ENCODE measurements at regions of chr6 and their contacts with region 1.

Region 1: GRCh38 chr6:1227935-1228753 is 83.8 kb upstream of the FOXQ1 start:
- DNase-seq: peak; percentile 91 to 94
- H3K4me3 ChIP-seq: peak overlapping the region; percentile 0; the same call in 1 of the 2 replicates
- H3K4me3 Mint-ChIP-seq: peak overlapping the region; percentile 52
- H3K27ac Mint-ChIP-seq: peak overlapping the region; percentile 67
- H3K4me1 ChIP-seq: peaks cover 57% of the 10 kb centered on the region
- H3K4me1 Mint-ChIP-seq: peaks cover 63% of the 10 kb centered on the region
- H3K27me3 ChIP-seq: no peaks in the 10 kb centered on the region
- H3K27me3 Mint-ChIP-seq: no peaks in the 10 kb centered on the region
- CTCF ChIP-seq: no peak

Region 2: GRCh38 chr6:996271-996852 is 231.8 kb before region 1 on chr6:
- CTCF ChIA-PET with region 1: no interaction called
- POLR2A ChIA-PET with region 1: no interaction called
- intact Hi-C with region 1: no loop called
- DNase-seq: no peak
- H3K4me3 ChIP-seq: no peak overlapping the region
- H3K4me3 Mint-ChIP-seq: no peak overlapping the region
- H3K27ac Mint-ChIP-seq: no peak overlapping the region
- H3K4me1 ChIP-seq: no peaks in the 10 kb centered on the region
- H3K4me1 Mint-ChIP-seq: no peaks in the 10 kb centered on the region
- H3K27me3 ChIP-seq: no peaks in the 10 kb centered on the region
- H3K27me3 Mint-ChIP-seq: no peaks in the 10 kb centered on the region
- CTCF ChIP-seq: no peak

Region 3: DNA sequence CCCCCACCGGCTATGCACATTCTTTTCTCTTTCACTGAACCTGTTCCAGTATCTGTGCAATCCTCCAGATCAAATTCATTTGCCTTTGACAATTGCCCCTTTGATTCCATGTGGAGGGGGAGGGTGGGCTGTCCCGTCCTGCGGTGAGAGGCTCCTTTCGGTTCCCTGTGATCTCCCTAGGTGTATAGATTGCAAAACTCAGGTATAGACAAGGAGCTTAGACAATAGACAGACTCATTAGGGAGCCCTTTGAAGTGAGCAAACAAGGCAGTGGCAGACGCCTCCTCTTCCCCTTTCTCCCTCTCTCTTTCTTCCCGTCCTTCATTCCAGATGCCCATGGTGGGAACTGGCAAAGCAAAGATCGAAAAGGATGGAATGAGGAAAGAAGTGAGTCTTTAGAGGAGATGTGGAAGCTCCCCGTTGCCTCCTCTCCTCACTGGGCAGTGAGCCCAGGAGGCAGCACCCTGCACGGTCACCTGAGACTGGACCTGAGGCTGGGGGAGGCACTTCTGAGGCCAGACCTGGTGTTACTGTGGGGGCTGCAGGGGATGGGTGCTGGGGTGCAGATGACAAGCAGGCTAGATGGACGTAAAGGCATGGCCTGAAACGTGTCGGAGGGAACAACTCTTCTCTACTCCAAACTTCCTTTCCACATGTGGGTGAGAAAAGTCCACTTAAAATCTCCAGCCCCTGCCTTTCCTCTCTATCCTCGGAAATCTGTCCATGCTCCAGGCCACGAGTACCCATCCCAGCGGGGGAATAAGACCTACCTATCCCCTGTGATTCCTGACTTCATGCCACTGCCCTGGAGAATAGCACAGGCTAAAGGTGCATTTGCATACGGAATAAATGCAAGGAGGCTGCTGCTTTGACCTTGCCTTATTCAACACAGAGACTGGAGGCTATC is 172.9 kb before region 1 on chr6:
- CTCF ChIA-PET with region 1: no interaction called
- POLR2A ChIA-PET with region 1: no interaction called
- intact Hi-C with region 1: loop called (anchors 1 kb)
- DNase-seq: peak; percentile 93
- H3K4me3 ChIP-seq: no peak overlapping the region
- H3K4me3 Mint-ChIP-seq: no peak overlapping the region
- H3K27ac Mint-ChIP-seq: no peak overlapping the region
- H3K4me1 ChIP-seq: peaks cover 52% of the 10 kb centered on the region
- H3K4me1 Mint-ChIP-seq: peaks cover 18% of the 10 kb centered on the region
- H3K27me3 ChIP-seq: no peaks in the 10 kb centered on the region
- H3K27me3 Mint-ChIP-seq: no peaks in the 10 kb centered on the region
- CTCF ChIP-seq: no peak

Region 4: GRCh38 chr6:1162367-1163275 is 65.5 kb before region 1 on chr6:
- CTCF ChIA-PET with region 1: no interaction called
- POLR2A ChIA-PET with region 1: no interaction called
- intact Hi-C with region 1: loop called (anchors 2 kb)
- DNase-seq: peak; percentile 29 to 43
- H3K4me3 ChIP-seq: peak overlapping the region; percentile 1
- H3K4me3 Mint-ChIP-seq: peak overlapping the region; percentile 57
- H3K27ac Mint-ChIP-seq: peak overlapping the region; percentile 8
- H3K4me1 ChIP-seq: peaks cover 16% of the 10 kb centered on the region; the same call in 1 of the 2 replicates
- H3K4me1 Mint-ChIP-seq: peaks cover 14% of the 10 kb centered on the region
- H3K27me3 ChIP-seq: no peaks in the 10 kb centered on the region
- H3K27me3 Mint-ChIP-seq: no peaks in the 10 kb centered on the region
- CTCF ChIP-seq: no peak